Activated T-helper 2 cell treated with anti-CD3 and anti-CD28 coated beads, Interferon-gamma antibody, Interleukin-2, Interleukin-4, amounts not matched to agents 10 μg/mL and 5 μg/mL and 100 μg/mL, durations not matched to agents 14 hours and 24 hours and 36 hours (primary cell): ENCODE measurements at regions of chr3 and their contacts with region 1.

Region 1: GRCh38 chr3:40971191-40972168 is 227.8 kb upstream of the CTNNB1 start:
- DNase-seq: peak; percentile 18
- H3K4me3 Mint-ChIP-seq: peak overlapping the region; percentile 77
- H3K27ac Mint-ChIP-seq: peak overlapping the region; percentile 100
- H3K4me1 Mint-ChIP-seq: peaks cover 74% of the 10 kb centered on the region
- H3K27me3 Mint-ChIP-seq: no peaks in the 10 kb centered on the region

Region 2: GRCh38 chr3:40437889-40438288 is 533.6 kb before region 1 on chr3:
- intact Hi-C with region 1: no loop called
- DNase-seq: no peak
- H3K4me3 Mint-ChIP-seq: no peak overlapping the region
- H3K27ac Mint-ChIP-seq: no peak overlapping the region
- H3K4me1 Mint-ChIP-seq: no peaks in the 10 kb centered on the region
- H3K27me3 Mint-ChIP-seq: peaks cover 3% of the 10 kb centered on the region

Region 3: GRCh38 chr3:40580494-40581091 is 390.9 kb before region 1 on chr3:
- intact Hi-C with region 1: loop called (anchors 10 kb)
- DNase-seq: peak; percentile 42
- H3K4me3 Mint-ChIP-seq: no peak overlapping the region
- H3K27ac Mint-ChIP-seq: no peak overlapping the region
- H3K4me1 Mint-ChIP-seq: peaks cover 3% of the 10 kb centered on the region
- H3K27me3 Mint-ChIP-seq: peaks cover 11% of the 10 kb centered on the region

Region 4: GRCh38 chr3:40961104-40961857 is 10.2 kb before region 1 on chr3:
- intact Hi-C with region 1: loop called (anchors 1 kb)
- DNase-seq: no peak
- H3K4me3 Mint-ChIP-seq: no peak overlapping the region
- H3K27ac Mint-ChIP-seq: peak overlapping the region; percentile 54
- H3K4me1 Mint-ChIP-seq: peaks cover 24% of the 10 kb centered on the region
- H3K27me3 Mint-ChIP-seq: no peaks in the 10 kb centered on the region

Region 5: DNA sequence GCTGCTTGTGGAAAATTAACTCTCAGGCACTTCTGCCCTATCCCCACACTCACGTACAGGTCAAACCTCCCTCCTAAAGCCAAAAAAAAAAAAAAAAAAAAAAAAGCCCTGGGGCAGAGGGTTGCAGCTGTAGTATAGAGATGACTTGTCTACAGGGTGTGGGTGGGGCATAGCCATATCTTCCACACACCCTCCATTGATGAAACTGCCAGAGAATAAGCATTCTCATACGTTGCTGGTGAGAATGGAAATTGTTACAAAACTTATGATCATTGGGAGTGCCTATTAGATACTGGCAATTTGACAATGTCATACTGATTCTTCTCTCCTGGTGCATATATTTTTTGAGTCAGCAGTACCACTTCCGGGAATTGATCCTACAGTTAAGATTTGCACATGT is 216.8 kb after region 1 on chr3:
- intact Hi-C with region 1: loop called (anchors 1 kb)
- DNase-seq: peak; percentile 13
- H3K4me3 Mint-ChIP-seq: no peak overlapping the region
- H3K27ac Mint-ChIP-seq: peak overlapping the region; percentile 78
- H3K4me1 Mint-ChIP-seq: peaks cover 33% of the 10 kb centered on the region
- H3K27me3 Mint-ChIP-seq: peaks cover 12% of the 10 kb centered on the region

Region 6: GRCh38 chr3:41205591-41205990 is 234.1 kb after region 1 on chr3:
- intact Hi-C with region 1: no loop called
- DNase-seq: no peak
- H3K4me3 Mint-ChIP-seq: no peak overlapping the region
- H3K27ac Mint-ChIP-seq: no peak overlapping the region
- H3K4me1 Mint-ChIP-seq: peaks cover 65% of the 10 kb centered on the region
- H3K27me3 Mint-ChIP-seq: no peaks in the 10 kb centered on the region

Region 7: GRCh38 chr3:41836360-41837134 is 865.1 kb after region 1 on chr3:
- intact Hi-C with region 1: loop called (anchors 5 kb)
- DNase-seq: no peak
- H3K4me3 Mint-ChIP-seq: no peak overlapping the region
- H3K27ac Mint-ChIP-seq: peak overlapping the region; percentile 22
- H3K4me1 Mint-ChIP-seq: peaks cover 8% of the 10 kb centered on the region
- H3K27me3 Mint-ChIP-seq: no peaks in the 10 kb centered on the region

Region 8: DNA sequence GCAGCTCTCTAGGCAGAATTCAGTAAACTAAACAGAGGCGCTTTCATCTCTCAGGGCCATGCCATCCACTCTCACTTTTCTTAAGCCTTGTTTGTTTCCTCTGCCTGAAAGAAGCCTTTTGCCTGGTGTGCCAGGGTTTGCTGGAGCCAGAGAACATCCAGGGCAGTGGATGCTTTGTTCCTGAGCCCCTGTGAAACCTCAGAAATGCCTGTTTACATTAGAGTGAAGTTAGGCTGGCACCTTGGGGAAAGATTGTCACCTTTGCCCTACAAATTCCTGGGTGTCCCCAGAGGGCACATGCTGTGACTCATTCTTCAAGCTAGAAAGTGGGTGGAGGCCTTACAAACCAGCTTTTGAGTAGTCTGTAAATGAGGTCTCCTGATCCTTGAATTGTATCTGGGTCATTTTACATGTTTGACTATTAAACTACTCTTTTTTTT is 1109.0 kb after region 1 on chr3:
- intact Hi-C with region 1: loop called (anchors 5 kb)
- DNase-seq: no peak
- H3K4me3 Mint-ChIP-seq: no peak overlapping the region
- H3K27ac Mint-ChIP-seq: peak overlapping the region; percentile 96
- H3K4me1 Mint-ChIP-seq: peaks cover 48% of the 10 kb centered on the region
- H3K27me3 Mint-ChIP-seq: no peaks in the 10 kb centered on the region